ENCODE measurements at regions of chr14 and their contacts with region 1.

Region 1: DNA sequence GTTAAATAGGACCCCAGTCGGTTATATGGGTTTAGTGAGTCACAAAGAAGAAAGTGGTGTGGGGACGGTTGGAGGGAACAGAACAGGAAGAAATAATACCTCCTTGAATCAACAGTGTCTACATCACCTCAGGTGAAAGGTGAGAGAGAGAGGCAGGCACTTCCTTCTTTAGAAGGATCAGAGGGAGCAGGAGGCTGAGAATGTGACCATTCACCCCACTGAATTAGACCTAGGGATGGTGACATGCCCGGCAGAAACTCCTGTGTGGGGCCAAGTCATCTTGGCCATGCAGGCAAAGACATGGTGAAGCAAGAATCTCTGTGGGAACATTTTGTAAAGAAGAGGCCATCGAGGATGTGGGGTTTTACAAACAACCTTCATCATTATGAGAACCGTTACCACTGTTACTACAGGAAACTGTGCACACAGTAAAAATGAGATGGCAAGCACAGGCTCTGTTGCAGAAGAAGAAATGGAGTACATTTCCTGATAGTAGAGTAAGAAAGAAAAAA is 1196.9 kb downstream of the VRK1 start:
- DNase-seq: peak in 8 of 9 donors; percentile 34 to 86 (median 78)
- ATAC-seq: peak; percentile 91
- H3K4me3 ChIP-seq: peak overlapping the region; percentile 33
- H3K4me3 Mint-ChIP-seq: peak overlapping the region; percentile 17 to 77 (median 65)
- H3K27ac ChIP-seq: peak overlapping the region; percentile 63
- H3K27ac Mint-ChIP-seq: peak overlapping the region; percentile 89 to 98 (median 93)
- H3K4me1 ChIP-seq: peaks cover 37 to 80% of the 10 kb centered on the region in 2 donors
- H3K4me1 Mint-ChIP-seq: peaks cover 37 to 89% (median 87%) of the 10 kb centered on the region in 7 donors
- H3K27me3 ChIP-seq: no peaks in the 10 kb centered on the region
- H3K27me3 Mint-ChIP-seq: no peaks in the 10 kb centered on the region

Region 2: GRCh38 chr14:97564334-97564733 is 429.7 kb before region 1 on chr14:
- CTCF ChIA-PET with region 1: no interaction called
- POLR2A ChIA-PET with region 1: no interaction called
- intact Hi-C with region 1: no loop called
- DNase-seq: no peak
- ATAC-seq: no peak
- H3K4me3 ChIP-seq: no peak overlapping the region
- H3K4me3 Mint-ChIP-seq: no peak overlapping the region
- H3K27ac ChIP-seq: no peak overlapping the region
- H3K27ac Mint-ChIP-seq: peak overlapping the region in 1 of 9 donors; percentile 81
- H3K4me1 ChIP-seq: no peaks in the 10 kb centered on the region
- H3K4me1 Mint-ChIP-seq: peaks cover 0 to 6% (median 0%) of the 10 kb centered on the region in 7 donors
- H3K27me3 ChIP-seq: no peaks in the 10 kb centered on the region
- H3K27me3 Mint-ChIP-seq: peaks cover 0 to 10% (median 0%) of the 10 kb centered on the region in 5 donors

Region 3: GRCh38 chr14:98008381-98009113 is 14.5 kb after region 1 on chr14:
- CTCF ChIA-PET with region 1: interaction called, 6 read pairs
- POLR2A ChIA-PET with region 1: interaction called, 25 read pairs
- intact Hi-C with region 1: loop called in 1 of 2 experiments (anchors 1 kb)
- DNase-seq: peak in 4 of 9 donors; percentile 12 to 31 (median 26)
- ATAC-seq: no peak
- H3K4me3 ChIP-seq: no peak overlapping the region
- H3K4me3 Mint-ChIP-seq: peak overlapping the region in 5 of 10 donors; percentile 0 to 42 (median 25)
- H3K27ac ChIP-seq: no peak overlapping the region
- H3K27ac Mint-ChIP-seq: peak overlapping the region in 8 of 9 donors; percentile 5 to 60 (median 27)
- H3K4me1 ChIP-seq: peaks cover 0 to 26% of the 10 kb centered on the region in 2 donors
- H3K4me1 Mint-ChIP-seq: peaks cover 6 to 45% (median 37%) of the 10 kb centered on the region in 7 donors
- H3K27me3 ChIP-seq: no peaks in the 10 kb centered on the region
- H3K27me3 Mint-ChIP-seq: no peaks in the 10 kb centered on the region

Region 4: DNA sequence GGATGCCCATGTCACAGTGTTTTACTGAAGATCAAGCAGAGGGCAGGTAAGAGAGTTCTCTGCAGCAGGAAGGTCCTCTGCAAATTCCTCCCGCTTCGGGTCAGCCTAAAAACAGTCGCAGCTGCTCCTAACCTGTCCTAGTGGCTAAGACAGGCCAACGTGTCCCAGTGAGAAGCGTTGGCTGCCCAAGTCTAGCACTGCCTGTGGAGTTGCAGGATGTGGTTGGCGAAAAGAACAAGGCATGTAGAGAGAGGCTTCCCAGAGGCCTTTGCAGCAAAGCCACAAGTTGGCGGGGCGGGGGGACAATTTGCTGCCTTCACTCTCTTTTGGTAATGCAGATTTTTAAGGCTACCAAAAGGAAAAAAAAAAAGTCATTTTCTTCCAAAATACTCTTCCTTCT is 937.8 kb after region 1 on chr14:
- CTCF ChIA-PET with region 1: no interaction called
- POLR2A ChIA-PET with region 1: no interaction called
- intact Hi-C with region 1: loop called in 1 of 2 experiments (anchors 5 kb)
- DNase-seq: peak; percentile 31 to 90 (median 88)
- ATAC-seq: peak; percentile 97
- H3K4me3 ChIP-seq: peak overlapping the region; percentile 40
- H3K4me3 Mint-ChIP-seq: peak overlapping the region; percentile 66 to 92 (median 80)
- H3K27ac ChIP-seq: peak overlapping the region; percentile 66
- H3K27ac Mint-ChIP-seq: peak overlapping the region; percentile 82 to 98 (median 94)
- H3K4me1 ChIP-seq: peaks cover 31 to 76% of the 10 kb centered on the region in 2 donors
- H3K4me1 Mint-ChIP-seq: peaks cover 51 to 100% (median 99%) of the 10 kb centered on the region in 7 donors
- H3K27me3 ChIP-seq: no peaks in the 10 kb centered on the region
- H3K27me3 Mint-ChIP-seq: peaks cover 0 to 2% (median 0%) of the 10 kb centered on the region in 5 donors